SK-N-SH (cell line): ENCODE measurements at regions of chr10 and their contacts with region 1.

Region 1: GRCh38 chr10:97475936-97476594 is 22.2 kb downstream of the MMS19 start:
- DNase-seq: no peak
- H3K4me3 ChIP-seq: no peak overlapping the region
- H3K27ac ChIP-seq: no peak overlapping the region
- H3K4me1 ChIP-seq: no peaks in the 10 kb centered on the region; a peak in 1 of 4 replicates
- H3K27me3 ChIP-seq: no peaks in the 10 kb centered on the region
- CTCF ChIP-seq: no peak
- EP300 ChIP-seq: no peak
- RAD21 ChIP-seq: no peak

Region 2: GRCh38 chr10:97463363-97464132 is 12.5 kb before region 1 on chr10:
- CTCF ChIA-PET with region 1: interaction called, 24 read pairs
- POLR2A ChIA-PET with region 1: no interaction called
- DNase-seq: peak; percentile 70
- H3K4me3 ChIP-seq: no peak overlapping the region
- H3K27ac ChIP-seq: peak overlapping the region; percentile 32 to 59; a peak in 3 of 4 replicates
- H3K4me1 ChIP-seq: peaks cover 0 to 4% of the 10 kb centered on the region in 2 experiments; a peak in 2 of 4 replicates
- H3K27me3 ChIP-seq: no peaks in the 10 kb centered on the region
- CTCF ChIP-seq: peak; percentile 89
- EP300 ChIP-seq: no peak
- RAD21 ChIP-seq: peak; percentile 83

Region 3: GRCh38 chr10:97490592-97490991 is 14.5 kb after region 1 on chr10:
- CTCF ChIA-PET with region 1: no interaction called
- POLR2A ChIA-PET with region 1: no interaction called
- DNase-seq: no peak
- H3K4me3 ChIP-seq: no peak overlapping the region
- H3K27ac ChIP-seq: no peak overlapping the region
- H3K4me1 ChIP-seq: peaks cover 4 to 12% of the 10 kb centered on the region in 2 experiments; a peak in 2 of 4 replicates
- H3K27me3 ChIP-seq: no peaks in the 10 kb centered on the region
- CTCF ChIP-seq: no peak
- EP300 ChIP-seq: no peak
- RAD21 ChIP-seq: no peak